Thyroid gland (tissue), 4 donors: ENCODE measurements at regions of chr9 and their contacts with region 1.

Region 1: DNA sequence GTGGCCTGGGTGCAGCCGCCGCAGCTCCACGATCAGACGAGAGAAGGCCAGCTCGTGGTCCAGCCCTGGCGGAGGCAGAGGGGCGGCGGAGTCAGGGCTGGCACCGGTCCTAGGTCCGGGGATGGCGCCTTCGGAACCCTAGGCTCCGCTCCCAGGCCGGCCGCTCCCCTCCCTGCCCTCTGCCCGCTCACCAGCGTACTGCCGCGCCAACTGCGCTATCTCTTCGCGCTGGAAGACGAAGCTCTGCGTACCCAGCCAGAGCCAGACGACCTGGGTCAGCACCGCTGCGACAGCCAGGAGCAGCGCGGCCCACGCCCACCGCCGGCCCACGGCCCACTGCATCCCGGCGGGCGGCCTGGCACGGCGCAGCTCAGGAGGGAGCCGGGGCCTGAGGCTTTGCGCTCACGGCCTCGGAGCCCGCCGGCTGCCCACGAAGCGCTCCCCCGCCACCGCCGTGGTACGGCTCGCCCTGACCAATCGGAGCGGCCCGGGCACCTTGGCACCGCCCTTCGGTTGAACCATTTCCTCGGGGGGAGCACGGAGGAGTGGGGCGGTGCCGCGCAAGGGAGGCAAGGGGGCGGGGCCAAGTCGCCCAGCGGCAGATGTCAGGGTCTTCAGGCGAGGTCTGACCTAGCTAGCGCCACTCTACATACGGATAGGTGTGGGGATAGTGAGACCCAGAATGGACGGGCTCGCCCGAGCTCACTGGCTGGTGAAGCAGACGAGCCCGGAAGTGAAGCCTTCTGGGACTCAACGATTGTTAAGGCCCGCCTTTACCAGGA is at the start of gene SIGMAR1:
- DNase-seq: peak; percentile 93 to 94
- H3K4me3 ChIP-seq: peak within 1 kb of the TSS; percentile 18 to 59 (median 23)
- H3K27ac ChIP-seq: peak within 1 kb of the TSS; percentile 72 to 87 (median 76)
- H3K4me1 ChIP-seq: peaks cover 16 to 18% of the 10 kb centered on the region in 2 donors
- H3K27me3 ChIP-seq: no peaks in the 10 kb centered on the region
- CTCF ChIP-seq: no peak
- POLR2A ChIP-seq: peak; percentile 34 to 88
- total RNA-seq, gene SIGMAR1: 48.6 to 89.7 (median 76.6) TPM

Region 2: DNA sequence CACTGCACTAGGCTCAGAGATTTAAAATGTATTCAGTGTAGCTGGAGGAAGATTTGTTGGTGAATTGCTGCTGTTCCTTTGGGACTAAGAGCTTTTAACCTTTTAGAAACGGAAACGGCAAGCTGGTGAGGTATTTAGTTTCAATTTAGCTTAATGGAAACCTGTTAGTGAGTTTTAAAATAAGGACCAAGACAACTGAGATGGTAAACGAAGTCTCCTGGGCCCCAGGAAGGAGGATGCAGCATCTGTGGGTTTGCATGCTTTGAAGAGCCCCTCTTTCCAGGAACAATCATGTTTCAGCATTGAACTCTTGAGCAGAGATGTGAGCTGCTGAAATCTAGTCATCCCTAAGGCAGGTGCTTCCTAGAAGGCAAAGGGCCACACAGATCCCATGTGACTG is 162.4 kb before region 1 on chr9:
- intact Hi-C with region 1: no loop called
- DNase-seq: no peak
- H3K4me3 ChIP-seq: no peak overlapping the region
- H3K27ac ChIP-seq: no peak overlapping the region
- H3K4me1 ChIP-seq: no peaks in the 10 kb centered on the region
- H3K27me3 ChIP-seq: no peaks in the 10 kb centered on the region
- CTCF ChIP-seq: no peak
- POLR2A ChIP-seq: no peak

Region 3: DNA sequence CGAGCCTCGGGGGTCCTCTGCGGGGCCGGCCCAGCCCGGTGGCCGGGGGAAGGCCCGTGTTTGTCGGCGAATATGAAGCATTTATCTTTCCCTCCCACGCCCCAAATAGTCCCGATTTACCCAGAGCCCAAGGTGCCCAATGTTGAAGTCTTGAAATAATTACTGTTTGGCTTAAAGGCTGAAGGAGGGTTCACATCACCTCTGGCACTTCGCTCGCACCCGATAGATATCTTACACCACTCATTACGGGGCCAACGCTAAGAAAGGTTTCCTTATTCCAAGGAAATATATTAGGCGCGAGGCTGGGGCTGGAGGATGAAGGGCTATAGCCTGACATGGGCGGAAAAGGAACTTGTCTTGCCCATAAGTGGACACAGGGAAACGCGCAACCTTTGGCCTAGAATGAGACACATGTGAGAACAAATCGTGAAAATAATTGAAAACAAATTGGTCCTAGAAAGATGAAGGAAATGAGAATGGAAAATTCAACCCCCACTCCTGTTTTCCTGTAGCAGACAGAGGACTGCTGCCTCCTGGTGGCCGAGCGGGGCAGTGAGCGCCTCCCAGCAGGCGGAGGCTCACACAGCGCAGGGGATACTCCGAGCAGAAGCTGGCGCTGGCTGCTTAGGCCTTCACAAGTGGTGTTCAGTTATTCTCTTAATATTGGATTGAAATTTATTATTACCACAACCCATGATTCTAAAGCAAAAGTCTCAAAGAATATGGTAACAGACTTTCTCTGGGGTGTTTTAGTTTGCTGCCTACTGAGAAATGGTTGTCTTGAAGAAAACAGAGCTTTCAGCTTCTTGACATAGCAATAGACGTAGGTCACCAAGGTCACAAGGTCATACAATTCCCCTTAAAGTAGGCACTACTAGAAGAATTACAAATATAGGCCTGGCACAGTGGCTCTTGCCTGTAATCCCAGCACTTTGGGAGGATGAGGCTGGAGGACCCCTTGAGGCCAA is 64.5 kb after region 1 on chr9:
- intact Hi-C with region 1: loop called (anchors 10 kb)
- DNase-seq: peak; percentile 83 to 87
- H3K4me3 ChIP-seq: peak overlapping the region; percentile 19 to 59 (median 47)
- H3K27ac ChIP-seq: peak overlapping the region; percentile 11 to 82 (median 79)
- H3K4me1 ChIP-seq: peaks cover 0 to 11% of the 10 kb centered on the region in 2 donors
- H3K27me3 ChIP-seq: no peaks in the 10 kb centered on the region
- CTCF ChIP-seq: peak; percentile 93 to 98 (median 96)
- POLR2A ChIP-seq: no peak